ENCODE measurements at regions of chr3 and their contacts with region 1.

Region 1: DNA sequence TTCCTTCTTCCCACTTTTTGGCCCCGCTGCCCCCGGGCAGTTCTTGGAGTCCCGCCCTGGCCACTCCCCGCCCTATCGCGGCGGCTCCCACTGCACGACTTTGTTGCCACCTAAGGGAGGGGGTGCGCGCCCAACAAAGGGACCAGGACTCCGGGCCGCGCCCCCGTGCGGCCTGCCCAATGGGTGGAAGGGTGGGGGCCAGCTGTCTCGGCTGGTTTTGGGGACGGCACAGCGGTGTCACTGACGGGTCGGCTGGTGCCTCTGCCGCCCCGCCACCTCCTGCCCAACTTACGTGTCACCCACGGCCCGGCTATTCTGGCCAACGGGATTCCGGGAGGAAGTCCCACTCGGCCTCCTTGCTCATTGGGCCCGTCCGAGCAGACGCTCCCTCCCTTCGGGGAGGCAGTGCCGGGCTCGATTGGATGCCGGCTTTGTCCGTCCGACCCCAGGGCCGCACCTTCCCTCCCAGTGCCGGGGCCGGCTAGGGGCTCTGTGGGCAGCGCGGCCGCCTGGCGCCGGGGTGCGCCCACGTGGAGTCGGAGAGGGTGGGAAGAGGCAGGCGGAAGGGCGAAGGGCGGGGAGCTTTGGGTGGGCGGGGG is at the start of gene GOLIM4:
- DNase-seq: peak; percentile 96 to 98 (median 97)
- H3K4me3 ChIP-seq: peak within 1 kb of the TSS; percentile 43 to 94 (median 60)
- H3K27ac ChIP-seq: peak within 1 kb of the TSS; percentile 50 to 99 (median 94)
- H3K4me1 ChIP-seq: peaks cover 3 to 28% of the 10 kb centered on the region in 2 donors
- H3K27me3 ChIP-seq: no peaks in the 10 kb centered on the region
- CTCF ChIP-seq: no peak
- POLR2A ChIP-seq: peak; percentile 64 to 86
- total RNA-seq, gene GOLIM4: 14.7 to 23.8 (median 18.3) TPM

Region 2: DNA sequence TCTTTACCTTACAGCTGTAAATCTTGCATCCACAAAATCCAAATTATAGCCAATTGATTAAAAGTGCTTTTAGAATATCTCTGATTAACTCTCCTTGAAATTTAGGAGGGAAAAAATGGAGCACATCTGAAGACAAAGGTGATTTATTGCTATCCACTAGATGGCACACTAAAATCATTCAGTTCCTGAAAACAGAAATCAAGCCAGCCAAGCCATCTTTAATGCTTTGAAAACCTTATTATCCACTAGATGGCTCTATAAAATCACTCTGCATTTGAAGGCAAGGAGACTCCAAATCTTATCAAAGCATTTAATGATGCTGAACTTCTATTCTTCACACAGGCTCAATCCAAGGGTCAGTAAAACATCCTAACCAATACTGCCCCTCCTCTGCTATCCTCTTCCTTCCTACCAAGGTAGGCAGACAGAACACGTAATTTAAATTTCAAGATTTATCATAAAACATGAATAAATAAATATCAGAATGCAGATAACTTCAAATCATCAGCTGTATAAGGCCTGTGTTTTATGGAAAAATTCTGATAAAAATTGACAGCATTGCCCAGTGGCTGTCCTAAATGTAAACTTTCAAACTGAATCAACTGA is 48.4 kb before region 1 on chr3:
- intact Hi-C with region 1: loop called in 1 of 2 experiments (anchors 10 kb)
- DNase-seq: peak in 2 of 7 donors; percentile 17 to 21
- H3K4me3 ChIP-seq: no peak overlapping the region
- H3K27ac ChIP-seq: no peak overlapping the region
- H3K4me1 ChIP-seq: peaks cover 0 to 17% of the 10 kb centered on the region in 2 donors
- H3K27me3 ChIP-seq: no peaks in the 10 kb centered on the region
- CTCF ChIP-seq: peak; percentile 68 to 98 (median 90)
- POLR2A ChIP-seq: no peak

Region 3: GRCh38 chr3:168141405-168141998 is 45.8 kb after region 1 on chr3:
- intact Hi-C with region 1: no loop called
- DNase-seq: no peak
- H3K4me3 ChIP-seq: no peak overlapping the region
- H3K27ac ChIP-seq: no peak overlapping the region
- H3K4me1 ChIP-seq: no peaks in the 10 kb centered on the region
- H3K27me3 ChIP-seq: no peaks in the 10 kb centered on the region
- CTCF ChIP-seq: no peak
- POLR2A ChIP-seq: no peak

Measured in adrenal gland (tissue), 19 donors.